CD8-positive, alpha-beta T cell (primary cell): ENCODE measurements at regions of chr18 and their contacts with region 1.

Region 1: DNA sequence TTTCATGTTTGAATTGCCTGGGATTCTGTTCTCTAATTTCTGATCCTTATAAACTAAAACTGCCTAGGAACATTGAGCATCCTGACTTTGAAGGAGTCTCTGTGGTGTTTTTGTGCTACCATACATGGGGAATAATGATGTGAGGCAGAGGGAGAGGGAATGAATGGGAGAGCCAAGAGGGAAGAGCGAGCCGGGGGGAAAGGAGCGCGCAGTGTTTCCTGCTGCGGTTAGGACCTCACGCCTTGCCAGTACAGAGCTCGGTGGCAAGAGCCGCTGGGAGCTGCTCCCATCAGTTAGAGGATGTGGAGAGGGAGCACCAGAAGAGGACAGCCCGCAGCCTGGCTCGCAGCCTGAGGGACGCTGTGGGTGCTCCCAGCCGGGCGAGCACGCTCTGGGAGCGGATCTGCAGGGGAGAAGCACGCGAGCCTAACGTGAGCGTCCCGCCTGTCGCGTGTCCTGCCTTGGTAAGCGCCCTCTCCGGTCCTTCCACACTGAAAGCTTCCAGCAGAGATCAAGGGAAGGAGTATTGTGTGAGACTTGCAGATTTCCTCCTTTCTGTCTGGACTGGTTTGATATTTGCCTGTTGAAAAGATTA is 114.7 kb downstream of the FAM210A start:
- DNase-seq: peak in 2 of 9 experiments; percentile 26 to 36
- ATAC-seq: no peak
- H3K4me3 ChIP-seq: peak overlapping the region; percentile 36 to 55
- H3K4me3 Mint-ChIP-seq: peak overlapping the region; percentile 82
- H3K27ac ChIP-seq: peak overlapping the region; percentile 33 to 53
- H3K27ac Mint-ChIP-seq: peak overlapping the region; percentile 98
- H3K4me1 ChIP-seq: peaks cover 72% of the 10 kb centered on the region
- H3K4me1 Mint-ChIP-seq: peaks cover 83% of the 10 kb centered on the region
- H3K27me3 ChIP-seq: no peaks in the 10 kb centered on the region
- H3K27me3 Mint-ChIP-seq: no peaks in the 10 kb centered on the region
- CTCF ChIP-seq: no peak

Region 2: DNA sequence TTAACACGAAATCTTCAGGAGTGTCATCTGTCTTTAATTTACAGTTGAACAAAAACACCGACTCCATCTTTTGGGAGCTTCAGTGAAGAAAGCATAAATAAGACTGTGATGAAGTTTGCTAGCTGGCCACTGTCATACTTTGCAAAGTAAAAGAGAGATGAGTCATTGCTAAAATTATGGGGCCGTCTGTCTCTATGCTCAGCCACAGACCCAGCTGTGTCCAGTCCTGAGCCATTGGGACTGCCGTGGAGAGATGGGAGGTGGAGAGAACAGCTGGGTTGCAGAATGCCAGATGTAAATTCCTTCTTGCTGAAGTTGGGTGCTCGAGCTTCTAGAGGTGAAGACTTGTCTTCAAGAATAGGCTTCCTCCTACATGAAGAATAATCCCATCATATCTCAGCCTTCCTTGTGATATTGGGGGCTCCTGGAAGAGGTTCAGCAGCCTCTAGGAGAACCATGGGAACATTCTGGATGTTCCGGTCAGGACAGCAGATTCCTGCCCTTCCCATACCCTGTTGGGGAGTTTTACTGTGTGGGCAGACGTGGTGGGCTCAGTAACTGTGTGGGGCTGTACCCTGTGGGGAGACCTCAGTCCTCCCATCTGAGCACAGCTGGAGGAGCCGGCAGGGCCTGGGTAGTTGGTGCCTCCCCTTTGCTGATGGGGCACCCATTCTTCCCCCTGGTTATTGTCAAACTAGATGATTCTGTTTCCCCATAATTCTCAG is 322.1 kb before region 1 on chr18:
- CTCF ChIA-PET with region 1: no interaction called
- POLR2A ChIA-PET with region 1: no interaction called
- intact Hi-C with region 1: no loop called
- DNase-seq: no peak
- ATAC-seq: no peak
- H3K4me3 ChIP-seq: no peak overlapping the region
- H3K4me3 Mint-ChIP-seq: no peak overlapping the region
- H3K27ac ChIP-seq: no peak overlapping the region
- H3K27ac Mint-ChIP-seq: peak overlapping the region; percentile 50
- H3K4me1 ChIP-seq: no peaks in the 10 kb centered on the region
- H3K4me1 Mint-ChIP-seq: peaks cover 46% of the 10 kb centered on the region
- H3K27me3 ChIP-seq: no peaks in the 10 kb centered on the region
- H3K27me3 Mint-ChIP-seq: no peaks in the 10 kb centered on the region
- CTCF ChIP-seq: no peak

Region 3: GRCh38 chr18:13464432-13465123 is 147.1 kb before region 1 on chr18:
- CTCF ChIA-PET with region 1: no interaction called
- POLR2A ChIA-PET with region 1: no interaction called
- intact Hi-C with region 1: loop called (anchors 5 to 10 kb)
- DNase-seq: peak; percentile 33 to 86 (median 76)
- ATAC-seq: peak; percentile 92
- H3K4me3 ChIP-seq: peak overlapping the region; percentile 60 to 73
- H3K4me3 Mint-ChIP-seq: peak overlapping the region; percentile 91
- H3K27ac ChIP-seq: peak overlapping the region; percentile 66 to 78
- H3K27ac Mint-ChIP-seq: peak overlapping the region; percentile 97
- H3K4me1 ChIP-seq: peaks cover 44% of the 10 kb centered on the region
- H3K4me1 Mint-ChIP-seq: peaks cover 71% of the 10 kb centered on the region
- H3K27me3 ChIP-seq: no peaks in the 10 kb centered on the region
- H3K27me3 Mint-ChIP-seq: no peaks in the 10 kb centered on the region
- CTCF ChIP-seq: no peak

Region 4: GRCh38 chr18:13539050-13539449 is 72.6 kb before region 1 on chr18:
- CTCF ChIA-PET with region 1: no interaction called
- POLR2A ChIA-PET with region 1: interaction called, 3 read pairs
- intact Hi-C with region 1: loop called in 1 of 2 experiments (anchors 2 kb)
- DNase-seq: peak; percentile 15 to 89 (median 64)
- ATAC-seq: peak; percentile 91
- H3K4me3 ChIP-seq: peak overlapping the region in 1 of 2 experiments; percentile 6
- H3K4me3 Mint-ChIP-seq: peak overlapping the region; percentile 63
- H3K27ac ChIP-seq: peak overlapping the region; percentile 63 to 83
- H3K27ac Mint-ChIP-seq: peak overlapping the region; percentile 91
- H3K4me1 ChIP-seq: peaks cover 66% of the 10 kb centered on the region
- H3K4me1 Mint-ChIP-seq: peaks cover 85% of the 10 kb centered on the region
- H3K27me3 ChIP-seq: no peaks in the 10 kb centered on the region
- H3K27me3 Mint-ChIP-seq: no peaks in the 10 kb centered on the region
- CTCF ChIP-seq: no peak

Region 5: GRCh38 chr18:13566941-13567746 is 44.6 kb before region 1 on chr18:
- CTCF ChIA-PET with region 1: interaction called, 4 read pairs
- POLR2A ChIA-PET with region 1: interaction called, 3 read pairs
- intact Hi-C with region 1: loop called (anchors 2 kb)
- DNase-seq: peak in 4 of 9 experiments; percentile 27 to 68 (median 36)
- ATAC-seq: peak; percentile 63
- H3K4me3 ChIP-seq: peak overlapping the region in 1 of 2 experiments; percentile 18
- H3K4me3 Mint-ChIP-seq: peak overlapping the region; percentile 74
- H3K27ac ChIP-seq: peak overlapping the region; percentile 22 to 39
- H3K27ac Mint-ChIP-seq: peak overlapping the region; percentile 90
- H3K4me1 ChIP-seq: peaks cover 36% of the 10 kb centered on the region
- H3K4me1 Mint-ChIP-seq: peaks cover 64% of the 10 kb centered on the region
- H3K27me3 ChIP-seq: no peaks in the 10 kb centered on the region
- H3K27me3 Mint-ChIP-seq: no peaks in the 10 kb centered on the region
- CTCF ChIP-seq: no peak

Region 6: GRCh38 chr18:13597068-13597467 is 14.6 kb before region 1 on chr18:
- CTCF ChIA-PET with region 1: interaction called, 9 read pairs
- POLR2A ChIA-PET with region 1: interaction called, 7 read pairs
- intact Hi-C with region 1: loop called in 1 of 2 experiments (anchors 1 kb)
- DNase-seq: no peak
- ATAC-seq: peak; percentile 40
- H3K4me3 ChIP-seq: no peak overlapping the region
- H3K4me3 Mint-ChIP-seq: no peak overlapping the region
- H3K27ac ChIP-seq: no peak overlapping the region
- H3K27ac Mint-ChIP-seq: peak overlapping the region; percentile 49
- H3K4me1 ChIP-seq: no peaks in the 10 kb centered on the region
- H3K4me1 Mint-ChIP-seq: peaks cover 14% of the 10 kb centered on the region
- H3K27me3 ChIP-seq: no peaks in the 10 kb centered on the region
- H3K27me3 Mint-ChIP-seq: no peaks in the 10 kb centered on the region
- CTCF ChIP-seq: no peak